ENCODE measurements at regions of chr16 and their contacts with region 1.

Region 1: DNA sequence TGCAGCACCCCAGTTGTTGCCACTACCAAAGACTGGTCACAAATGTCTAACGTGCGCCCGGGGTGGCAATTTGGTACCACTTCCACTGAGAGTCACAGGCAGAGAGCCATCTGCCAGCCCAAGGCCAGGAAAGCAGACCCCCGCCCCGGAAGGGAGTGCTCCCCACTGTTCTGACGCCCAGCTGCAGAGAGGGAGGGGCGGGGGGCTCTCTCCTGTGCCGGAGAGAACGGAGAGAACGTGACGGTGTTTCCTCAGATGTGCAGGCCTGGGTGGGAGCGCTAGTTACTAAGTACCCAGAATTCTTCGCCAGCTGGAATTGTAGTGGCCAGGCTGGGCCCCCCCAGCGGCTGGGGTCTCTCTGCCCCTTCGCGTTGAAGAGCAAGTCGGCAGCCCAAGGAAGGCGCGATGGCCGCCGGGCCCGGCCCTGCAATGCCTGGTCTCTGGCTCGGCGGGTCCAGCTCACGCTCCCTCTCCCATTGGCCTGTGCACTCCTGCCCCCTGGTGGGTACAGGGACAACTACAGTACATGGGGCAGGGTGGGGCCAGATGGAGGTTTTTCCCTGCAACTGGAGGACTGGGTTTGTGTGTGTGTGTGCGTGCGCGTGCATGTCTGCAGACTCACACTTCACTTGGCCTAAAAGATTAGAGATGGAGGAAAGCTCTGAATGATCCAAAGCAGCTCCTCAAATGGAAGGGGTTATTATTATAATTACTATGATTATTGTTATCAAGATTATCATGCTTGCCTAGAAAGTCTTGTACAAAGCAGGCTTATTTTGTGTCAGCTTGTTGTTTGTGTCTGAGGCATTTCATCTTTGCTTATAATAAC is 107.1 kb downstream of the AMFR start:
- DNase-seq: peak; percentile 84
- H3K4me3 ChIP-seq: no peak overlapping the region
- H3K27ac ChIP-seq: no peak overlapping the region
- H3K4me1 ChIP-seq: no peaks in the 10 kb centered on the region
- H3K27me3 ChIP-seq: no peaks in the 10 kb centered on the region
- CTCF ChIP-seq: peak; percentile 91

Region 2: GRCh38 chr16:55701442-55702319 is 616.5 kb before region 1 on chr16:
- CTCF ChIA-PET with region 1: no interaction called
- POLR2A ChIA-PET with region 1: no interaction called
- intact Hi-C with region 1: loop called (anchors 10 kb)
- DNase-seq: peak; percentile 61
- H3K4me3 ChIP-seq: no peak overlapping the region
- H3K27ac ChIP-seq: no peak overlapping the region
- H3K4me1 ChIP-seq: peaks cover 11% of the 10 kb centered on the region
- H3K27me3 ChIP-seq: no peaks in the 10 kb centered on the region
- CTCF ChIP-seq: peak; percentile 62

Region 3: GRCh38 chr16:55842369-55843104 is 475.7 kb before region 1 on chr16:
- CTCF ChIA-PET with region 1: no interaction called
- POLR2A ChIA-PET with region 1: no interaction called
- intact Hi-C with region 1: loop called (anchors 10 kb)
- DNase-seq: peak; percentile 77
- H3K4me3 ChIP-seq: no peak overlapping the region
- H3K27ac ChIP-seq: no peak overlapping the region
- H3K4me1 ChIP-seq: peaks cover 4% of the 10 kb centered on the region
- H3K27me3 ChIP-seq: no peaks in the 10 kb centered on the region
- CTCF ChIP-seq: peak; percentile 79

Region 4: DNA sequence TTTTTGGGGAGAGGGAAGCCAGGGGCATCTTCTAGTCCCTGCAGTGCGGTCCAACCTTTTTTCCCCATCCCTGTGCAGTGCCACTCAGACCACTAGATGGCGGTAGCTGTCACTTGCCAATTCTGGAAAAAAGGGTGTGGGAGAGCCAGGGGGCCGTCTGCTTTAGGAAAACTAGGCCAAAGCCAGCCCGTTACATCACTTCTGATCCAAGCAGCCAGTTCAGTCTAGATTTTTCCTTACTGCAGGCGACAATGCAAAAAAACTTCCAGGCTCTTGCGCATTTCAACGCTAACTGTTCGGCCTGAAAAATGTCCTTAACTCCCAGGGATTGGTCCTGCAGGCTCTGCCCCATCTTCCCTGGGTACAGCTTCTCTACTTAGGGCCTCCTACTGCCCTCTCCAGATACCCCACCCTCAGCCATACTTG is 373.8 kb before region 1 on chr16:
- CTCF ChIA-PET with region 1: interaction called, 6 read pairs
- POLR2A ChIA-PET with region 1: no interaction called
- intact Hi-C with region 1: loop called (anchors 1 kb)
- DNase-seq: peak; percentile 73
- H3K4me3 ChIP-seq: no peak overlapping the region
- H3K27ac ChIP-seq: no peak overlapping the region
- H3K4me1 ChIP-seq: no peaks in the 10 kb centered on the region
- H3K27me3 ChIP-seq: peaks cover 12% of the 10 kb centered on the region
- CTCF ChIP-seq: peak; percentile 91

Region 5: DNA sequence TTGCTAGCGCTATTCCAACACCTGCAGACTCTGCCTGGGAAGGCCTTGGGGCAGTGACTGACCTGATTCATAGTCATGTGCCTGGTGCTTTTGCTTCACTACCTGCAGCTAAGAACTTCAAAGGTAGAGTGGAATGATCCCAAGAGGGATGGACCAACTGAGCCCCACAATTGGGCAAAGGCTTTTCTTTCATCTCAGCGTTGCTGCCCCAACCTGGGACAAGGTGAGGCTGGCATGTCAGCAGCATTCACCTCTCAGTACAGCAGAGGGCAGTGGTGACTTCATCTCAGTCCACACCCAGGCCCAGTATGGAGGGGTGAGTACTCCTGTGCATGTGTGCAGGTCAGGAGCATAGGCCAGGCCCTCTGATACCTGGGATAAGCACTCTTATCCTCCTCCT is 276.5 kb before region 1 on chr16:
- CTCF ChIA-PET with region 1: no interaction called
- POLR2A ChIA-PET with region 1: no interaction called
- intact Hi-C with region 1: loop called (anchors 5 kb)
- DNase-seq: peak; percentile 10
- H3K4me3 ChIP-seq: no peak overlapping the region
- H3K27ac ChIP-seq: no peak overlapping the region
- H3K4me1 ChIP-seq: no peaks in the 10 kb centered on the region
- H3K27me3 ChIP-seq: peaks cover 5% of the 10 kb centered on the region
- CTCF ChIP-seq: peak; percentile 38

Region 6: GRCh38 chr16:56125922-56126321 is 192.3 kb before region 1 on chr16:
- CTCF ChIA-PET with region 1: no interaction called
- POLR2A ChIA-PET with region 1: no interaction called
- intact Hi-C with region 1: no loop called
- DNase-seq: no peak
- H3K4me3 ChIP-seq: no peak overlapping the region
- H3K27ac ChIP-seq: no peak overlapping the region
- H3K4me1 ChIP-seq: no peaks in the 10 kb centered on the region
- H3K27me3 ChIP-seq: peaks cover 11% of the 10 kb centered on the region
- CTCF ChIP-seq: no peak

Measured in A673 (cell line).